CD8-positive, alpha-beta T cell (primary cell): ENCODE measurements at regions of chr3 and their contacts with region 1.

Region 1: GRCh38 chr3:69013253-69014021 is at the start of gene EOGT:
- DNase-seq: peak; percentile 50 to 87 (median 81)
- ATAC-seq: peak; percentile 79
- H3K4me3 ChIP-seq: peak within 1 kb of the TSS; percentile 76 to 81
- H3K4me3 Mint-ChIP-seq: peak within 1 kb of the TSS; percentile 88
- H3K27ac ChIP-seq: peak within 1 kb of the TSS; percentile 44 to 72
- H3K27ac Mint-ChIP-seq: peak within 1 kb of the TSS; percentile 87
- H3K4me1 ChIP-seq: peaks cover 6% of the 10 kb centered on the region
- H3K4me1 Mint-ChIP-seq: peaks cover 26% of the 10 kb centered on the region
- H3K27me3 ChIP-seq: no peaks in the 10 kb centered on the region
- H3K27me3 Mint-ChIP-seq: no peaks in the 10 kb centered on the region
- CTCF ChIP-seq: peak; percentile 56
- total RNA-seq, gene EOGT: 9.9 to 15.2 TPM

Region 2: GRCh38 chr3:68988740-68989139 is 24.7 kb before region 1 on chr3:
- CTCF ChIA-PET with region 1: no interaction called
- POLR2A ChIA-PET with region 1: no interaction called
- intact Hi-C with region 1: no loop called
- DNase-seq: no peak
- ATAC-seq: no peak
- H3K4me3 ChIP-seq: no peak overlapping the region
- H3K4me3 Mint-ChIP-seq: no peak overlapping the region
- H3K27ac ChIP-seq: no peak overlapping the region
- H3K27ac Mint-ChIP-seq: no peak overlapping the region
- H3K4me1 ChIP-seq: no peaks in the 10 kb centered on the region
- H3K4me1 Mint-ChIP-seq: no peaks in the 10 kb centered on the region
- H3K27me3 ChIP-seq: no peaks in the 10 kb centered on the region
- H3K27me3 Mint-ChIP-seq: no peaks in the 10 kb centered on the region
- CTCF ChIP-seq: no peak

Region 3: GRCh38 chr3:69110941-69111546 is 97.6 kb after region 1 on chr3:
- CTCF ChIA-PET with region 1: no interaction called
- POLR2A ChIA-PET with region 1: no interaction called
- intact Hi-C with region 1: loop called in 1 of 2 experiments (anchors 5 kb)
- DNase-seq: peak in 1 of 9 experiments; percentile 20
- ATAC-seq: no peak
- H3K4me3 ChIP-seq: no peak overlapping the region
- H3K4me3 Mint-ChIP-seq: no peak overlapping the region
- H3K27ac ChIP-seq: no peak overlapping the region
- H3K27ac Mint-ChIP-seq: no peak overlapping the region
- H3K4me1 ChIP-seq: no peaks in the 10 kb centered on the region
- H3K4me1 Mint-ChIP-seq: peaks cover 5% of the 10 kb centered on the region
- H3K27me3 ChIP-seq: no peaks in the 10 kb centered on the region
- H3K27me3 Mint-ChIP-seq: no peaks in the 10 kb centered on the region
- CTCF ChIP-seq: no peak